IMR-90 (cell line): ENCODE measurements at regions of chr7 and their contacts with region 1.

Region 1: GRCh38 chr7:112058686-112059085 is 147.5 kb downstream of the DOCK4 start:
- DNase-seq: no peak
- ATAC-seq: no peak
- H3K4me3 ChIP-seq: no peak overlapping the region
- H3K27ac ChIP-seq: no peak overlapping the region
- H3K4me1 ChIP-seq: peaks cover 1% of the 10 kb centered on the region
- H3K27me3 ChIP-seq: no peaks in the 10 kb centered on the region
- CTCF ChIP-seq: no peak
- POLR2A ChIP-seq: no peak
- RAD21 ChIP-seq: no peak

Region 2: DNA sequence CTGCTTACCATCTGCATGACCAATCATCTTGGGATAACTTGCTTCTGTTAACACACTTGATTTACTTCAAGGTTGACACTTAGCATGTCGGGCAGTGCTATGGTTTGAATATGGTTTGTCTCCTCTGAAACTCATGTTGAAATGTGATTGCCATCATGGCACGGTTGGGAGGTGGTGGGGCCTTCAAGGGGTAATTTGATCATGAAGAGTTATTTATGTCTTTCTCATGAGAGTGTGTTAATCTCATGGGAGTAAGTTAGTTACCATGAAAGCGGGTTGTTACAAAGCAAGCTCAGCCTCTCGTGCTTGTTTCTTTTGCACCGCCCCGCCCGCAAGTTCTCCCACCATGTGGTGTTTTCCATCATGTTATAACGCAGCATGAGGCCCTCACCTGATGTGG is 16.1 kb before region 1 on chr7:
- CTCF ChIA-PET with region 1: no interaction called
- POLR2A ChIA-PET with region 1: interaction called, 11 read pairs
- dilution Hi-C with region 1: no loop called
- in situ Hi-C with region 1: no loop called
- intact Hi-C with region 1: no loop called
- DNase-seq: no peak
- ATAC-seq: no peak
- H3K4me3 ChIP-seq: no peak overlapping the region
- H3K27ac ChIP-seq: no peak overlapping the region
- H3K4me1 ChIP-seq: no peaks in the 10 kb centered on the region
- H3K27me3 ChIP-seq: no peaks in the 10 kb centered on the region
- CTCF ChIP-seq: no peak
- POLR2A ChIP-seq: no peak
- RAD21 ChIP-seq: no peak

Region 3: GRCh38 chr7:112192236-112193154 is 133.8 kb after region 1 on chr7:
- CTCF ChIA-PET with region 1: no interaction called
- POLR2A ChIA-PET with region 1: no interaction called
- dilution Hi-C with region 1: no loop called
- in situ Hi-C with region 1: no loop called
- intact Hi-C with region 1: no loop called
- DNase-seq: peak; percentile 88
- ATAC-seq: peak; percentile 92
- H3K4me3 ChIP-seq: no peak overlapping the region
- H3K27ac ChIP-seq: no peak overlapping the region
- H3K4me1 ChIP-seq: no peaks in the 10 kb centered on the region
- H3K27me3 ChIP-seq: no peaks in the 10 kb centered on the region
- CTCF ChIP-seq: no peak
- POLR2A ChIP-seq: no peak
- RAD21 ChIP-seq: no peak